ENCODE measurements at regions of chr3 and their contacts with region 1.

Region 1: GRCh38 chr3:50192689-50193141 is 1.3 kb downstream of the GNAT1 start:
- DNase-seq: peak; percentile 77 to 100
- H3K4me3 ChIP-seq: no peak overlapping the region
- H3K27ac ChIP-seq: no peak overlapping the region
- H3K4me1 ChIP-seq: peaks cover 0 to 14% (median 7%) of the 10 kb centered on the region in 4 experiments; a peak in 5 of 7 replicates
- H3K27me3 ChIP-seq: peaks cover 0 to 12% (median 4%) of the 10 kb centered on the region in 4 experiments; a peak in 3 of 7 replicates
- CTCF ChIP-seq: peak in 2 of 3 experiments; percentile 92 to 98; a peak in 3 of 4 replicates
- EP300 ChIP-seq: 0 out of 3 replicates have a peak, but pooled peaks of 1 of the 2 experiments have one; percentile 33
- POLR2A ChIP-seq: no peak
- RAD21 ChIP-seq: peak; percentile 94 to 96

Region 2: DNA sequence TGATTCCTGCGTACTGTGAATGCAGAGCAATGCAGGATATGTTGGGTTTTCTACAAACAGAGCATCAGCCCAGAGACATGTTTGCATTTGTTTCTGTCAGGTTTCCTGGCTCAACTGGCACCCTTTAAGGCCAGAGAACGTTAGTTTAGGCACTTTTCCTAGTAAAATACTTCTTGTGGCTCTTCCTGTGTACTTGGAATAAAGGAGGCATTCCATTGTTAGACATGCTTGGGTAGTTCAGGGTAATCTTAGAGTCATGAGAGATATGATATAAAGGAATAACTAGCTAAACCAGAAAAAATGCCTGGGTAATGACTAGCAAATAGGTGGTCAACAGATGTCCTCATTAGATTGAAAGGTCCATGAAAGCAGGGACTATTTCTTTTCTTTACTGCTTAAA is 164.4 kb before region 1 on chr3:
- CTCF ChIA-PET with region 1: no interaction called
- POLR2A ChIA-PET with region 1: no interaction called
- DNase-seq: no peak
- H3K4me3 ChIP-seq: no peak overlapping the region
- H3K27ac ChIP-seq: no peak overlapping the region
- H3K4me1 ChIP-seq: peaks cover 0 to 3% (median 1%) of the 10 kb centered on the region in 4 experiments; a peak in 1 of 7 replicates
- H3K27me3 ChIP-seq: no peaks in the 10 kb centered on the region
- CTCF ChIP-seq: no peak
- EP300 ChIP-seq: no peak
- POLR2A ChIP-seq: no peak
- RAD21 ChIP-seq: no peak

Region 3: GRCh38 chr3:50050361-50050760 is 142.4 kb before region 1 on chr3:
- CTCF ChIA-PET with region 1: no interaction called
- POLR2A ChIA-PET with region 1: no interaction called
- DNase-seq: no peak
- H3K4me3 ChIP-seq: no peak overlapping the region
- H3K27ac ChIP-seq: no peak overlapping the region
- H3K4me1 ChIP-seq: no peaks in the 10 kb centered on the region
- H3K27me3 ChIP-seq: no peaks in the 10 kb centered on the region
- CTCF ChIP-seq: no peak
- EP300 ChIP-seq: no peak
- POLR2A ChIP-seq: no peak
- RAD21 ChIP-seq: no peak

Region 4: DNA sequence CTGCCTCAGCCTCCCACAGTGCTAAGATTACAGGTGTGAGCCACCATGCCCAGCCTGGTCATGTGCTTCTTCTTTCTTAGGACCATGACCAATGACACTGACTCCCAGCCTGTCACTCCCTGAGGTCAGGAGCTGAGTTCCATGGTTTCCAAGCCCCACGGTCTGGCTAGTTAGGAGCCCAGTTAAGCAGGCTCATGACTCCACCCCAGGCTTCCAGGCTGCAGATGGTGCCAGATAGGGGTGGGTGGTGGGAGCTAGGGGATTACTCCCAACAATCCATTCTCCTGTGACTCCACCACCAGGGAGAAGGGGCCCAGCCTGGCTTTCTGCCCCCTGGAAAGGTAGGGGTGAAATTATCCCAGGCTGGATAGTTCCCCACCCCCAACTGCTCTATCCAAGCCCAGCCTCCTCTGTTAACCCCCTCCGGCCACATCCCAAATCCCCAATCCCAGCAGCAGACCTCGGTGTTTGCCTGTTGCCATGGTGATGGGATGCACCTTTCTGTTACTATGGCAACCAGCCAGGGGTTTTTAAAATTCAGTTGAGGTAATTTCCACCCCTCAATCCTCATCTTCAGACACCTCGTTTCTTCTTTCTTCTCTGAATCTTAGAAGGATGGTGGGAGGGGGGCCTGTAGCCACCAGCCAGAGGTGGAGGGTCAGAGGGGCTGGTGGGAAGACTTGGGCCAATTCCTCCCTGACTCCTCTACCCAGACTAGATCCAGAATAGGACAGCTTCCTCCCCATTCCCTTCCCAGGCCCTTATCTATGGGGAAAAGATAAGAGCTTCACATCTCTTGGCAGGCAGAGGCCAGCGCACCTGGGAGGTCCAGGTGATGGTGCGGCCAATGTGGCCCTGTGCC is 60.1 kb before region 1 on chr3:
- CTCF ChIA-PET with region 1: interaction called, 591 read pairs
- POLR2A ChIA-PET with region 1: interaction called, 5 read pairs
- DNase-seq: no peak
- H3K4me3 ChIP-seq: no peak overlapping the region
- H3K27ac ChIP-seq: 0 out of 2 replicates have a peak overlapping the region, but pooled peaks have one; percentile 32
- H3K4me1 ChIP-seq: peaks cover 0 to 9% (median 4%) of the 10 kb centered on the region in 4 experiments; a peak in 5 of 7 replicates
- H3K27me3 ChIP-seq: no peaks in the 10 kb centered on the region; a peak in 1 of 7 replicates
- CTCF ChIP-seq: no peak
- EP300 ChIP-seq: no peak
- POLR2A ChIP-seq: no peak
- RAD21 ChIP-seq: no peak

Region 5: DNA sequence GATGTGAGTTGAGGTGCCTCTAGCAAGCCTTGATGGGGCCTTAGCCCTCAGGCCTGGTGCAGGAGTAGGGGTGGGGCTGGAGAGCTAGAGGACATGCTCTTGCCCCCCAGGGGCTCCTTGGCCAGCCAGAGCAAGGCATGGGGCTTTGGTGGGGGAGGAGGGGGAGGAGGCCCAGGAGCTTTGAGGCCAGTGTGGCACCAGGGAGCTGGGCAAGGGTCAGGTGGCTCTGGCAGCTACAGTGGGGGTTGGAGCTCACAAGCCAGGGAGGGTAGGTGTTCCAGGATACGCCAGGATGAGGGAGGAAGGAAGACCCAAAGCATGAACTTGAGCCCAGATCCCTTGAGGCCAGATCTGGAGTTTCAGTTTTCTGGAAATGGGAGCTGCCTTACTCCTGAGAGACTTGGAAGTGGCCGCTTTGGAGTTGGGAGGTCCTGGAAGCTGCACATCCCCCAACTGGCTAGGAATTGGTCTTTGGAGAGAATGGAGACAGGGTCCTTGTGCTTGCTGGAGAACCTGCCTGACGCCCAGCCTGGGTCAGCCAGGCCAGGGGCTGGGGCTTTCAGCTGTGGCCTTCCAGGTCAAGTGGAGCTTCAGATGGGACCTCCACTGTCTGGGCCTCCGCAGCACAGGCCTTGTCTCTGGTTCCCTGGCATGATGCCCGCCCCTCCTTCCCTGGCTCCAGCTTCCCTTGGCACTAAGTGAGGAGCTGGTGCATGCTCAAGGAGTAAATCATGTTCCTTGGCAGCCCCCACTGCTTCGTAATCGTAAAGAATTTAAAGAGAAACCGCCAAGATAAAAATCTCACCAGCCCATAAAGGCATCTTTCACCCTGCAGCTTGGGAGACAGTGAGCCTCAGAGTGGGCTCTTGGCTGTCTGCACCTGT is 28.9 kb before region 1 on chr3:
- CTCF ChIA-PET with region 1: interaction called, 299 read pairs
- POLR2A ChIA-PET with region 1: interaction called, 3 read pairs
- DNase-seq: no peak
- H3K4me3 ChIP-seq: no peak overlapping the region
- H3K27ac ChIP-seq: no peak overlapping the region
- H3K4me1 ChIP-seq: peaks cover 0 to 27% (median 16%) of the 10 kb centered on the region in 4 experiments; a peak in 6 of 7 replicates
- H3K27me3 ChIP-seq: no peaks in the 10 kb centered on the region
- CTCF ChIP-seq: no peak
- EP300 ChIP-seq: no peak
- POLR2A ChIP-seq: no peak
- RAD21 ChIP-seq: no peak

Region 6: DNA sequence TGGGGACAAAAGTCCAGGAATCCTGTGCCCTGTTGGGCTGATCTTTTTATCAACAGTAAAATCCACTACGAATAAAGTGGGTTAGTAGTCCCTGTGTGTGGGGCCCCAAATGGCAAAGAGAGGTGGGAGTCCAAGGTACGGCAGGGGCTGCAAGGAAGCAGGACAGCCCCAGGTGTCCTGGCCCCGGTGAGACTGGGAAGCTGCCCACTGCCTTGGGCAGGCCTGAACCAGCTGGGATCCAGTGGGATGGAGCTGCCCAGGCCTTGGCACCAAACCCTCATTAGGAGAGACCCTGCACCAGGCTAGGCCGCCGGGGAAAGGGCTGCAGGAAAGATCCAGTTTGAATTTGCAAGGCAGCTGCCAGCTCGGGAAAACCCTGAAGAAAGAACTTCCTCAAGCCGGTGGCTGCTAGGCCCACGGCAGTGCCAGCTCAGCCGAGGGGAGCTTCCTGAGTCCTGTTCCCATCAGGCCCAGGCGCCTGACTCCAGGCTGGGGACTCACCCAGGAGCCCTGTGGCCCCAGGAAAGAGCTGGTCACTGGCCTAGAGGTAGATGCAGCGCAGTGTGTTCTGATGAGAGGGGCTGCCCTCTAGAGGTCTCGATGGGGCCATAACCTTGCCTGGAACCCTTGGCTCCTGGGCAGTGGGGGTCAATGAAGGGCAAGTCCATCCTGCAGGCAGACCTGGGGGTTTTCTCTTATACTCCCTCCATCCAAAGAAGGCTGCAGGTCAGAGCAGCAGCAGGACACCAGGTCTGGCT is 28.9 kb after region 1 on chr3:
- CTCF ChIA-PET with region 1: interaction called, 1,138 read pairs
- POLR2A ChIA-PET with region 1: interaction called, 38 read pairs
- DNase-seq: peak in 1 of 2 experiments; percentile 70
- H3K4me3 ChIP-seq: no peak overlapping the region
- H3K27ac ChIP-seq: no peak overlapping the region
- H3K4me1 ChIP-seq: peaks cover 0 to 3% (median 1%) of the 10 kb centered on the region in 4 experiments; a peak in 5 of 7 replicates
- H3K27me3 ChIP-seq: peaks cover 0 to 2% (median 0%) of the 10 kb centered on the region in 4 experiments; a peak in 1 of 7 replicates
- CTCF ChIP-seq: peak in 2 of 3 experiments; percentile 77 to 91; a peak in 3 of 4 replicates
- EP300 ChIP-seq: no peak
- POLR2A ChIP-seq: no peak
- RAD21 ChIP-seq: peak; percentile 74 to 81

Region 7: DNA sequence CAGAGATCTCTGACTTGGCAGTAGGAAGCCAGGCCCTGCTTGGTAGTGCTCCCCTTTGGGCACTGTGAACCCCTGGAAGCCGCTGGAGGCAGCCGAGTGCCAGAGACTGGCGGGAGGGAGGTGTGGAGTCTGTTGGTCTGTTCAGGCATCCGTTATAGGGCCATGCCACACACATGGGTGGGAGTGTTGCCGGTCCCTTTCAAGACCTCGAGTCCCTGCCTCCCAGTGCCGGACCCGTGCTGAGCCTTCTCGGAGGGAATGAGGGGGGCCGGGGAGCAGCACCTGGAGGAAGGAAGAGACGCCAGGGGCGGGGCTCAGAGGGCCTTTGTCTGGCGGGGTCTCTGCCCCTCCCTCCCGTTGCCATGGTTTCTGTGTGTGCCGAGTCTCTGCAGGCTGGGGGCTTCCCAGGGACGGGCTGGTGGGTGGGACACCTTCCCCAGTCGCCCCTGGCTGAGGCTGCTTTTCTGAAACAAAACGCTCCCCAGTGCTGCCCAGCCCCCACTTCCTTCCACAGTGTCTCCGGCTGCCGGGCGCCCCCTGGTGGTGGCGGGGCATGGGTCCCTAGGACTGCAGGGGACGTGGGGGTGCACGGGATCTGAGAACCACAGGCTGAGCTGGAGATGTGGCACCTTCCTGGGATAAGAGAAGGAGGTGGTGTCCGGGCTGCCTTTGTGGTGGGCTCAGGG is 53.3 kb after region 1 on chr3:
- CTCF ChIA-PET with region 1: interaction called, 2,149 read pairs
- POLR2A ChIA-PET with region 1: interaction called, 5 read pairs
- DNase-seq: peak in 1 of 2 experiments; percentile 99
- H3K4me3 ChIP-seq: peak overlapping the region in 2 of 4 experiments; percentile 23 to 27; a peak in 4 of 8 replicates
- H3K27ac ChIP-seq: peak overlapping the region; percentile 53
- H3K4me1 ChIP-seq: peaks cover 5 to 48% (median 41%) of the 10 kb centered on the region in 4 experiments
- H3K27me3 ChIP-seq: no peaks in the 10 kb centered on the region
- CTCF ChIP-seq: peak in 2 of 3 experiments; percentile 91 to 97; a peak in 3 of 4 replicates
- EP300 ChIP-seq: peak in 1 of 2 experiments; percentile 69; a peak in 1 of 3 replicates
- POLR2A ChIP-seq: no peak; a peak in 1 of 3 replicates
- RAD21 ChIP-seq: peak; percentile 75 to 91

Region 8: GRCh38 chr3:50321336-50322114 is 128.8 kb after region 1 on chr3:
- CTCF ChIA-PET with region 1: interaction called, 11 read pairs
- POLR2A ChIA-PET with region 1: no interaction called
- DNase-seq: peak; percentile 75 to 93
- H3K4me3 ChIP-seq: peak overlapping the region; percentile 89 to 96 (median 94)
- H3K27ac ChIP-seq: peak overlapping the region; percentile 100
- H3K4me1 ChIP-seq: peaks cover 0 to 35% (median 19%) of the 10 kb centered on the region in 4 experiments; a peak in 6 of 7 replicates
- H3K27me3 ChIP-seq: no peaks in the 10 kb centered on the region
- CTCF ChIP-seq: peak in 2 of 3 experiments; percentile 69 to 71; a peak in 3 of 4 replicates
- EP300 ChIP-seq: peak in 1 of 2 experiments; percentile 97; a peak in 2 of 3 replicates
- POLR2A ChIP-seq: peak in 1 of 2 experiments; percentile 97; a peak in 2 of 3 replicates
- RAD21 ChIP-seq: 0 out of 4 replicates have a peak, but pooled peaks of 1 of the 2 experiments have one; percentile 20

Measured in H1 (cell line).